Transverse colon (tissue), 4 donors: ENCODE measurements at regions of chr4 and their contacts with region 1.

Region 1: GRCh38 chr4:81466841-81467671 is 4.7 kb downstream of the RASGEF1B start:
- DNase-seq: peak; percentile 84
- H3K4me3 ChIP-seq: no peak overlapping the region
- H3K27ac ChIP-seq: peak overlapping the region; percentile 72 to 80 (median 76)
- H3K4me1 ChIP-seq: peaks cover 15 to 73% (median 50%) of the 10 kb centered on the region in 4 donors
- H3K27me3 ChIP-seq: no peaks in the 10 kb centered on the region
- CTCF ChIP-seq: peak; percentile 90 to 96 (median 93)
- EP300 ChIP-seq: no peak
- POLR2A ChIP-seq: no peak

Region 2: DNA sequence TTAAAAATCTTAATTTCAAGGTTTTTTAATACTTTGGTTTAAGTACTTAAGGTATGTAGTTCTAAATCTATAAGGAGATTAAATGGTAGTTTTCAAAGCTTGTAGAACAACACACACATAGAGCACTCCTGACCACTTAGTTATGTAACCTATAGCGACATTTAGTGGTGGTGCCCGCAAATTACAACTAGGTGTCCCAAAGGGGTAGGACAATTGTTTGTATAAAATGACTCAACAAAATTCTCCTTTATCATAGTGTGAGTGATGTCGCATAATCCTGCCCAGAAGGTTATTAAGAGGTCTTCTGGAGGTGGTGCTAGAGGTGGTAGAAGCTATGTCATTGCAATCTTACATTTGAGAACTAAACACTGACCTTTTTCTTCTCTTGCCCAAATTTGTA is 377.7 kb after region 1 on chr4:
- in situ Hi-C with region 1: loop called (anchors 5 to 10 kb)
- intact Hi-C with region 1: loop called (anchors 5 kb)
- DNase-seq: peak; percentile 87
- H3K4me3 ChIP-seq: no peak overlapping the region
- H3K27ac ChIP-seq: no peak overlapping the region
- H3K4me1 ChIP-seq: no peaks in the 10 kb centered on the region
- H3K27me3 ChIP-seq: no peaks in the 10 kb centered on the region
- CTCF ChIP-seq: peak; percentile 76 to 88 (median 84)
- EP300 ChIP-seq: no peak
- POLR2A ChIP-seq: no peak